ENCODE measurements at regions of chr4 and their contacts with region 1.

Region 1: GRCh38 chr4:15882675-15883086 is 55.9 kb downstream of the FGFBP1 start:
- DNase-seq: peak; percentile 48
- H3K4me3 Mint-ChIP-seq: no peak overlapping the region
- H3K27ac Mint-ChIP-seq: no peak overlapping the region
- H3K4me1 Mint-ChIP-seq: no peaks in the 10 kb centered on the region
- H3K27me3 Mint-ChIP-seq: peaks cover 32% of the 10 kb centered on the region

Region 2: DNA sequence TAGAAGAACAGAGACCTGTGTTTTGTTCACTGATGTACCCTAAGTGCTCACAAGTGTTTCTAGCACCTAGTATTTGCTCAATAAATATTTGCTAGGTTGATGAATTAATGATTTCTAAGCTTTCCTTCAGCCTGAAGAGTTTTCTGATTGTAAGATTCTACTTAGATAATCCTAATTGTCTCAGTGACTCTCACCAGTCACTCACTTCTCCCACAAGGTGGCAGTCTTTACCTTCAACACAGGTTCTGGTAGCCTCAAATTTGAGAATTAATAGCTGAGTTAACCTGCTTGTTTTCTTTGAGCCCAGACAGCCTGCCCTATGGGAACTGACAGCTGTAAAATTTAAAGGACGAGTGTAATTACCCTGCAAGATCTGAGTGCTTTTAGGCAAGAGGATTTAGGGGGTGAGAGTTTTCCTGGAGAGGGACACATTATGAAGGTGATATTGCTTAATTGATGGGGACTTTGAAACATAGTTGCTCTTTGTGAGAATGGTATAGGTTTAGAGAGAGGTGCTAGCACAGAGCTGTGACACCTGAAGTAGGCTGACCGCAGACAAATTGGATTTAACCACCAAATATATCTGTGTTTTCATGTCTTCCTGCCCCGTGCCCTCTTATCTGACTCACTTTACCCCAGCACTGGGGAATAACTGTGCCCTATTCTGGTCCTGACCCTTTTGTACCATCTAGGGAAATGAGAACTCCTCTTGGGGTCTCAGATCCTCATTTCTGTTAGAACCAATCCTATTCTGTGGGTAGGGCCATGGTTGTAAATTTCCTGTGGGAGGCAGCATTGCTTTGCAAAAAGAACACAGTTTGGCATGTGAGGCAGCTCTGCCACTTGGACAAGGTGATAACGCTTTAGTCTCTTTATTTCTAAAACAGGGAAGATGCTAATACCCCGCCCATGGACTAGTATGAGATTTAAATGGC is 76.8 kb before region 1 on chr4:
- CTCF ChIA-PET with region 1: interaction called, 13 read pairs
- POLR2A ChIA-PET with region 1: no interaction called
- DNase-seq: peak; percentile 35
- H3K4me3 Mint-ChIP-seq: no peak overlapping the region
- H3K27ac Mint-ChIP-seq: no peak overlapping the region
- H3K4me1 Mint-ChIP-seq: peaks cover 52% of the 10 kb centered on the region
- H3K27me3 Mint-ChIP-seq: no peaks in the 10 kb centered on the region

Region 3: GRCh38 chr4:15956179-15956850 is 73.6 kb after region 1 on chr4:
- CTCF ChIA-PET with region 1: interaction called, 32 read pairs
- POLR2A ChIA-PET with region 1: interaction called, 4 read pairs
- DNase-seq: peak; percentile 84
- H3K4me3 Mint-ChIP-seq: no peak overlapping the region
- H3K27ac Mint-ChIP-seq: no peak overlapping the region
- H3K4me1 Mint-ChIP-seq: peaks cover 2% of the 10 kb centered on the region
- H3K27me3 Mint-ChIP-seq: peaks cover 24% of the 10 kb centered on the region

Region 4: GRCh38 chr4:16001484-16001858 is 118.8 kb after region 1 on chr4:
- CTCF ChIA-PET with region 1: interaction called, 14 read pairs
- POLR2A ChIA-PET with region 1: no interaction called
- DNase-seq: peak; percentile 52
- H3K4me3 Mint-ChIP-seq: no peak overlapping the region
- H3K27ac Mint-ChIP-seq: no peak overlapping the region
- H3K4me1 Mint-ChIP-seq: no peaks in the 10 kb centered on the region
- H3K27me3 Mint-ChIP-seq: peaks cover 12% of the 10 kb centered on the region

Region 5: DNA sequence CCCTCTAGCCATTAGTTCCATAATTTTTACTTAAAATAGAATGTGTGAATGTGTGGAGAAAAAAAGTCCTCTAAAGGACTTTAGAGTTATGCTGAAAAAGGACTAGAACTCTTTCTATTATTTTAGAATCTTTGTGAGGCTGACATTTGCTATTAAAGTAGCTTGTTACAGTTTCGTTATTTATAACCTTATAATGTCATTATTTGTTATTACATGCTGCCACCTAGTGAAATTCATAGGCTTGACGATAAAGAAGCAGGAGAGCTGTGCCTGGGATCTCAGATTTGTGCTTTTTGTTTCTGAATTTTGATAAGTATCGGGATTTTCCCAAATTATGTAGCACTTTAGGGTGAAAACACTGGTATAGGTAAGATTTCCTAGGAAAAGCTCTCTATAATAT is 382.1 kb after region 1 on chr4:
- CTCF ChIA-PET with region 1: interaction called, 15 read pairs
- POLR2A ChIA-PET with region 1: no interaction called
- DNase-seq: no peak
- H3K4me3 Mint-ChIP-seq: no peak overlapping the region
- H3K27ac Mint-ChIP-seq: no peak overlapping the region
- H3K4me1 Mint-ChIP-seq: peaks cover 7% of the 10 kb centered on the region
- H3K27me3 Mint-ChIP-seq: peaks cover 3% of the 10 kb centered on the region

Measured in activated CD4-positive, alpha-beta memory T cell treated with anti-CD3 and anti-CD28 coated beads, Interleukin-2, amount 10 ng/mL, durations not matched to agents 7 days and 5 days (primary cell).